ENCODE measurements at regions of chr17 and their contacts with region 1.

Region 1: DNA sequence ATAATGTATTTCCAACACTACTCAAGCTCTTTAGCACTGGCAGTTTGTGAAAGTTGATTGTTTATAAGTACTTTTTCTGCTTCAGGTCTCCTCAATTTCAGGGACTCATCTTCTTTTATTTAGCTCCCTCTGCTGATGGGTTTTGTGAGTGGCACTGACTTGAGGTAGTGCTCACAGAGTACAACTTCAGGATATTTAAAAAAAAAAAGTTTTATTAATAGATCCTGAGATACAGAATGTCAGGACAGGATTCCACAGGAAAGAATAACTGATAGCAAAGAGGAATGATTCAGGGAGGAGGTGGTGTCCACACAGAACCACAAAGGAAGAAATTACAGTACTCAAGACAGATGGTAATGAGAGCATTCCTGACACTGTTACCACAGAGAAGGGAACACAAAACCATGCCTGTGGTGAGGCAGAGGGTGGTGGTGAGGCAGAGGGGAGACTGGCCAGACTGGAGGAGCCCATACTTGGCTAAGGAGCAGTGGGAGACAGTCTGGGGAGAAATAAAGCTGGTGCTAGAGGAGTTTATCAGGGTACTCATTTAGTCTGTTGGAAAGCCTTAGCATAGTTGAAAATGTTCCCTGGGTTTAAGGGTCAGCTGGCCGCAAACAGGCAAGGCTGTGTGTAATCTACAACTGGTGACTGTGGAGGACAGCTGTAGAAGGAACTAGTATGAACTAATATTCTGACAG is 63.7 kb downstream of the SPAG9 start:
- DNase-seq: peak; percentile 84
- ATAC-seq: peak; percentile 67
- H3K4me3 ChIP-seq: no peak overlapping the region
- H3K27ac ChIP-seq: peak overlapping the region; percentile 35
- H3K4me1 ChIP-seq: peaks cover 35% of the 10 kb centered on the region
- H3K27me3 ChIP-seq: no peaks in the 10 kb centered on the region
- CTCF ChIP-seq: peak; percentile 90

Region 2: GRCh38 chr17:51000835-51001638 is 55.9 kb before region 1 on chr17:
- CTCF ChIA-PET with region 1: interaction called, 7 read pairs
- POLR2A ChIA-PET with region 1: no interaction called
- intact Hi-C with region 1: loop called (anchors 1 kb)
- DNase-seq: peak; percentile 86
- ATAC-seq: peak; percentile 80
- H3K4me3 ChIP-seq: no peak overlapping the region
- H3K27ac ChIP-seq: no peak overlapping the region
- H3K4me1 ChIP-seq: no peaks in the 10 kb centered on the region
- H3K27me3 ChIP-seq: no peaks in the 10 kb centered on the region
- CTCF ChIP-seq: peak; percentile 90

Region 3: GRCh38 chr17:51015145-51015558 is 41.8 kb before region 1 on chr17:
- CTCF ChIA-PET with region 1: interaction called, 3 read pairs
- POLR2A ChIA-PET with region 1: interaction called, 6 read pairs
- intact Hi-C with region 1: loop called (anchors 5 kb)
- DNase-seq: peak; percentile 50
- ATAC-seq: peak; percentile 85
- H3K4me3 ChIP-seq: no peak overlapping the region
- H3K27ac ChIP-seq: no peak overlapping the region
- H3K4me1 ChIP-seq: peaks cover 10% of the 10 kb centered on the region; the same call in 1 of the 2 replicates
- H3K27me3 ChIP-seq: no peaks in the 10 kb centered on the region
- CTCF ChIP-seq: no peak

Region 4: GRCh38 chr17:51046514-51047384 is 10.2 kb before region 1 on chr17:
- CTCF ChIA-PET with region 1: interaction called, 5 read pairs
- POLR2A ChIA-PET with region 1: no interaction called
- intact Hi-C with region 1: loop called (anchors 1 kb)
- DNase-seq: no peak
- ATAC-seq: no peak; the same call in 1 of the 2 replicates
- H3K4me3 ChIP-seq: no peak overlapping the region
- H3K27ac ChIP-seq: no peak overlapping the region
- H3K4me1 ChIP-seq: peaks cover 9% of the 10 kb centered on the region; the same call in 1 of the 2 replicates
- H3K27me3 ChIP-seq: no peaks in the 10 kb centered on the region
- CTCF ChIP-seq: no peak

Region 5: DNA sequence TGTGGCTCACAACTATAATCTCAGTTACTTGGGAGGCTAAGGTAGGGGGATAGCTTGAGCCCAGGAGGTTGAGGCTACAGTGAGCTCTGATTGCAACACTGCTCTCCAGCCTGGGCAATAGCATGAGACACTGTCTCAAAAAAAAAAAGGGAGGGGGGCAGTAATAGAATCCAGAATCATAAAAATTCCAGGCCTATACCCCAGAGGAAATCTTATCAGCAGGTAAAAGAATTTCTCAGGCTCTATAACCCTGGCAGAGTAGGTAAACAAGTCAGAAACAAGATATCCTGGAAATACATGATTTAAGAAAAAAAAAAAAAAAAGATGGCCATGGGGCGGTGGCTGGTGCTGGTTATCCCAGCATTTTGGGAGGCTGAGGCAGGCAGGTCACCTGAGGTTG is 50.8 kb after region 1 on chr17:
- CTCF ChIA-PET with region 1: interaction called, 4 read pairs
- POLR2A ChIA-PET with region 1: interaction called, 32 read pairs
- intact Hi-C with region 1: no loop called
- DNase-seq: no peak
- ATAC-seq: peak; percentile 14; the same call in 1 of the 2 replicates
- H3K4me3 ChIP-seq: no peak overlapping the region
- H3K27ac ChIP-seq: no peak overlapping the region
- H3K4me1 ChIP-seq: no peaks in the 10 kb centered on the region
- H3K27me3 ChIP-seq: no peaks in the 10 kb centered on the region
- CTCF ChIP-seq: no peak

Region 6: GRCh38 chr17:51153210-51154072 is 96.5 kb after region 1 on chr17 and contains the start of gene NME1:
- CTCF ChIA-PET with region 1: interaction called, 9 read pairs
- POLR2A ChIA-PET with region 1: interaction called, 3 read pairs
- intact Hi-C with region 1: loop called (anchors 2 kb)
- DNase-seq: peak; percentile 100
- ATAC-seq: peak; percentile 91
- H3K4me3 ChIP-seq: peak within 1 kb of the TSS; percentile 87
- H3K27ac ChIP-seq: peak within 1 kb of the TSS; percentile 74
- H3K4me1 ChIP-seq: peaks cover 21% of the 10 kb centered on the region
- H3K27me3 ChIP-seq: no peaks in the 10 kb centered on the region
- CTCF ChIP-seq: peak; percentile 98
- total RNA-seq, gene NME1: 538 and 592 TPM in 2 replicates

Region 7: GRCh38 chr17:51238255-51238887 is 181.4 kb after region 1 on chr17:
- CTCF ChIA-PET with region 1: no interaction called
- POLR2A ChIA-PET with region 1: no interaction called
- intact Hi-C with region 1: no loop called
- DNase-seq: no peak
- ATAC-seq: peak; percentile 46
- H3K4me3 ChIP-seq: no peak overlapping the region
- H3K27ac ChIP-seq: no peak overlapping the region
- H3K4me1 ChIP-seq: no peaks in the 10 kb centered on the region; the same call in 1 of the 2 replicates
- H3K27me3 ChIP-seq: no peaks in the 10 kb centered on the region
- CTCF ChIP-seq: no peak

Measured in PC-3 (cell line).